Activated CD4-positive, alpha-beta T cell treated with anti-CD3 and anti-CD28 coated beads for 36 hours (primary cell): ENCODE measurements at regions of chr7 and their contacts with region 1.

Region 1: GRCh38 chr7:105876091-105876963 is at the start of gene ATXN7L1:
- DNase-seq: peak; percentile 96
- ATAC-seq: peak; percentile 85
- H3K4me3 Mint-ChIP-seq: peak within 1 kb of the TSS; percentile 82
- H3K27ac Mint-ChIP-seq: peak within 1 kb of the TSS; percentile 77
- H3K4me1 Mint-ChIP-seq: peaks cover 65% of the 10 kb centered on the region
- H3K27me3 Mint-ChIP-seq: peaks cover 3% of the 10 kb centered on the region
- total RNA-seq, gene ATXN7L1: 11.2 to 16.9 TPM

Region 2: GRCh38 chr7:105652359-105652993 is 223.9 kb before region 1 on chr7:
- CTCF ChIA-PET with region 1: interaction called, 3 read pairs
- POLR2A ChIA-PET with region 1: no interaction called
- intact Hi-C with region 1: loop called in 1 of 2 experiments (anchors 5 kb)
- DNase-seq: peak; percentile 86
- ATAC-seq: peak; percentile 90
- H3K4me3 Mint-ChIP-seq: no peak overlapping the region
- H3K27ac Mint-ChIP-seq: no peak overlapping the region
- H3K4me1 Mint-ChIP-seq: peaks cover 14% of the 10 kb centered on the region
- H3K27me3 Mint-ChIP-seq: no peaks in the 10 kb centered on the region

Region 3: DNA sequence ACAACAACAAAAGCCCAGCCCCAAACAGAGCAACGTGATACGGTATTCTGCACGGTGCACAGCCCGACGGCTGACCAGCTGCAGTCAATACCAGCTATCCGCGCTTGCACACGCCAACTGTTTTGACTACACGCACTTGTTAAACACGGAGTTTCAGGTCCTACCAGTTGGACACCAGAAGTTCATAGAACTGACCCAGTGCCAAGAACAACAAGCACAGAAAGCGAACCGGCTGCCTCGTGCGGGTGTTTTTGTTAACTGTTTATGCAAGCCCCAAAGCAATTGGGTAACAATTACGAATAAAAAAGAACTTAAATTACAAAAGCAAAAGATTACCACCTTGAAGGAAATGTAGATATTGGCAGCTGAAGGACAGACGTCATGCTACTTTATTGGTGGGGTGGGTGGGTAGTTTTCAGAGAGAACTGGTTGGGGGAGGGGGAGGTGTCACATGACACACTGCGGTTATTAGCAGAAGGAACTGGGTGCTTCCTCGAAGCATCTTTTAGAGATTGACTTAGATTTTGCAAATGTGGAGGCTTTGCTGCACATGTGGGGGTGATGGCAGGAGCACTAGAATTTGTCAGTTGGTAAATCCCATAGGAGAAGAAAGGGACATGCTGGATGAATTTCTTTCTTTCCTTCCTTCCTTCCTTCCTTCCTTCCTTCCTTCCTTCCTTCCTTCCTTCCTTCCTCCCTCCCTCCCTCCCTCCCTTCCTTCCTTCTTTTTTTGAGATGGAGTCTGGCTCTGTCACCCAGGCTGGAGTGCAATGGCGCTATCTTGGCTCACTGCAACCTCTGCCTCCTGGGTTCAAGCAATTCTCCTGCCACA is 184.4 kb before region 1 on chr7:
- CTCF ChIA-PET with region 1: no interaction called
- POLR2A ChIA-PET with region 1: no interaction called
- intact Hi-C with region 1: loop called in 1 of 2 experiments (anchors 2 kb)
- DNase-seq: peak; percentile 71
- ATAC-seq: peak; percentile 53
- H3K4me3 Mint-ChIP-seq: peak overlapping the region; percentile 76
- H3K27ac Mint-ChIP-seq: peak overlapping the region; percentile 93
- H3K4me1 Mint-ChIP-seq: peaks cover 43% of the 10 kb centered on the region
- H3K27me3 Mint-ChIP-seq: no peaks in the 10 kb centered on the region

Region 4: GRCh38 chr7:105769901-105770628 is 106.3 kb before region 1 on chr7:
- CTCF ChIA-PET with region 1: interaction called, 7 read pairs
- POLR2A ChIA-PET with region 1: no interaction called
- intact Hi-C with region 1: loop called (anchors 1 to 5 kb)
- DNase-seq: peak; percentile 53
- ATAC-seq: peak; percentile 70
- H3K4me3 Mint-ChIP-seq: no peak overlapping the region
- H3K27ac Mint-ChIP-seq: no peak overlapping the region
- H3K4me1 Mint-ChIP-seq: peaks cover 40% of the 10 kb centered on the region
- H3K27me3 Mint-ChIP-seq: no peaks in the 10 kb centered on the region

Region 5: GRCh38 chr7:105924945-105925344 is 48.6 kb after region 1 on chr7:
- CTCF ChIA-PET with region 1: interaction called, 8 read pairs
- POLR2A ChIA-PET with region 1: no interaction called
- intact Hi-C with region 1: loop called (anchors 1 to 5 kb)
- DNase-seq: peak; percentile 59
- ATAC-seq: peak; percentile 91
- H3K4me3 Mint-ChIP-seq: no peak overlapping the region
- H3K27ac Mint-ChIP-seq: peak overlapping the region; percentile 80
- H3K4me1 Mint-ChIP-seq: peaks cover 24% of the 10 kb centered on the region
- H3K27me3 Mint-ChIP-seq: peaks cover 3% of the 10 kb centered on the region

Region 6: GRCh38 chr7:106022193-106022821 is 146.0 kb after region 1 on chr7:
- CTCF ChIA-PET with region 1: interaction called, 3 read pairs
- POLR2A ChIA-PET with region 1: no interaction called
- intact Hi-C with region 1: loop called (anchors 1 to 5 kb)
- DNase-seq: peak; percentile 82
- ATAC-seq: peak; percentile 87
- H3K4me3 Mint-ChIP-seq: peak overlapping the region; percentile 19
- H3K27ac Mint-ChIP-seq: peak overlapping the region; percentile 84
- H3K4me1 Mint-ChIP-seq: peaks cover 57% of the 10 kb centered on the region
- H3K27me3 Mint-ChIP-seq: no peaks in the 10 kb centered on the region